ENCODE measurements at regions of chr10 and their contacts with region 1.

Region 1: GRCh38 chr10:17430647-17431355 is 23.6 kb downstream of the ST8SIA6 start:
- DNase-seq: peak; percentile 65 to 81 (median 70)
- H3K4me3 ChIP-seq: peak overlapping the region in 2 of 7 experiments; percentile 4 to 19
- H3K27ac ChIP-seq: peak overlapping the region; percentile 22 to 50
- H3K4me1 ChIP-seq: peaks cover 27 to 94% (median 78%) of the 10 kb centered on the region in 4 experiments
- H3K27me3 ChIP-seq: no peaks in the 10 kb centered on the region

Region 2: GRCh38 chr10:17290226-17290625 is 140.6 kb before region 1 on chr10:
- CTCF ChIA-PET with region 1: interaction called, 29 read pairs
- POLR2A ChIA-PET with region 1: no interaction called
- DNase-seq: peak; percentile 67 to 79 (median 76)
- H3K4me3 ChIP-seq: no peak overlapping the region
- H3K27ac ChIP-seq: no peak overlapping the region
- H3K4me1 ChIP-seq: peaks cover 0 to 4% (median 0%) of the 10 kb centered on the region in 4 experiments
- H3K27me3 ChIP-seq: no peaks in the 10 kb centered on the region

Region 3: DNA sequence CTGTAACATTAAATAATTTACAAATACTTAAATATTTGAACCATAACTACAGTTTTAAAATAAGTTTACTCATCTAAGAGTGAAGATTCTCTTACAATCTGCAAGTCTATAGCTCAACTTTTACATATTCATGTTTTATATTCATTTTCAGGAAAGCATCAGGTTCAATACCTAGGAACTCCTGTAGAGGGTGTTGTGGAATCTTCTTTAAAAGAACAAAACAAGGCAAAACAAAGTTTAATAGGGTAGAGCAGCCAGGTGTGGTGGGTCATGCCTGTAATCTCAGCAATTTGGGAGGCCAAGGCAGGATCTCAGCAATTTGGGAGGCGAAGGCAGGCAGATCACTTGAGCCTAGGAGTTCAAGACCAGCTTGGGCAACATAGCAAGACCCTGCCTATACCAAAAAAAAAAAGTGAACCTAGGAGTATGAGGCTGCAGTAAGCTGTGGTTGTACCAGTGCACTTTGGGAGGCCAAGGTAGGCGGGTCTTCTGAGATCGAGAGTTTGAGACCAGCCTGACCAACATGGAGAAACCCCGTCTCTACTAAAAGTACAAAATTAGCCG is 21.5 kb before region 1 on chr10:
- CTCF ChIA-PET with region 1: interaction called, 79 read pairs
- POLR2A ChIA-PET with region 1: interaction called, 9 read pairs
- DNase-seq: peak in 2 of 3 donors; percentile 53 to 56
- H3K4me3 ChIP-seq: no peak overlapping the region
- H3K27ac ChIP-seq: no peak overlapping the region
- H3K4me1 ChIP-seq: peaks cover 0 to 37% (median 18%) of the 10 kb centered on the region in 4 experiments
- H3K27me3 ChIP-seq: no peaks in the 10 kb centered on the region

Region 4: GRCh38 chr10:17418249-17418648 is 12.6 kb before region 1 on chr10:
- CTCF ChIA-PET with region 1: interaction called, 79 read pairs
- POLR2A ChIA-PET with region 1: interaction called, 9 read pairs
- DNase-seq: no peak
- H3K4me3 ChIP-seq: no peak overlapping the region
- H3K27ac ChIP-seq: no peak overlapping the region
- H3K4me1 ChIP-seq: peaks cover 0 to 32% (median 8%) of the 10 kb centered on the region in 4 experiments
- H3K27me3 ChIP-seq: no peaks in the 10 kb centered on the region

Region 5: GRCh38 chr10:17443707-17444387 is 13.0 kb after region 1 on chr10:
- CTCF ChIA-PET with region 1: interaction called, 64 read pairs
- POLR2A ChIA-PET with region 1: interaction called, 4 read pairs
- DNase-seq: peak in 2 of 3 donors; percentile 80 to 86
- H3K4me3 ChIP-seq: peak overlapping the region in 6 of 7 experiments; percentile 3 to 59 (median 38)
- H3K27ac ChIP-seq: peak overlapping the region; percentile 25 to 67
- H3K4me1 ChIP-seq: peaks cover 9 to 44% (median 18%) of the 10 kb centered on the region in 4 experiments
- H3K27me3 ChIP-seq: no peaks in the 10 kb centered on the region

Region 6: DNA sequence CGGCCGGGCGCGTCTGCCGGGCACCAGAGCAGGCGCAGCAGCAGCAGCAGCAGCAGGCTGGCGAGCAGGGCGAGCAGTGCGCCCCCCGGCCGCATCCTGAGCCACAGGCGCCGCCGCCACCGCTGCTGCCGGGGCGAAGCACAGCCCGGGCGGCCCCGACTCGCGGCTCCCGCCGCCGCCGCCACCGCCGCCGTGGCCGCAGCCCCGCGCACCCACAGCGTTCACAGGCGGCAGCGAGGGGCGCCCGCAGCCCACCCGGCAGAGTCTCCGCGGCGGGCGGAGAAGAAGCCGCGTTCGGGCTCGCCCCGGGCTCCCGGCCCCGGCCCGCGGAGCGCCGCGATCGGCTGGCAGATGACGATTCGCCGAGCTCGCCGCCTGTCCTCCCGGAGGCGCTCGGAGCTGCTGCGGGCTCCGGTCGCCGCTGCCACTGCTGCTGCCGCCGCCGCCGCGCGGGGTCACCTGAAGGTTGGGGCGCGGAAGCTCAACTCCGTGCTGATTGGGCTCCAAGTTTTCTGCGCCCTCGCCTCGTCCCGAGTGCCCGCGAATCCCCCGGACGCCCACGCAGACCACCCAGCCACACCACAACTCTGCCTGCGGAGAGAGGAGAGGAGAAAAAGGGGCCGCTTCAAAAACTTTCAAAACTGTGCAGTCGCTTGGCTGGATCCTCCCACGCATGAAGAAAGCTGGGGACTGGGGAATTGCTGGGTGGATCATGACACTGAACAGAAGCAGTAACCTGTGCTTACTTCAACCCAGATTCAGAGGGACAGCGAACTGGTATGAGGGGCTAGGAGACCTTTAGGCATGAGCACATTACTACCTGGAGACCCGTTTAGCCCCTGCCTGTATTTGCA is 23.6 kb after region 1 on chr10 and contains the start of gene ST8SIA6:
- CTCF ChIA-PET with region 1: interaction called, 10 read pairs
- POLR2A ChIA-PET with region 1: interaction called, 9 read pairs
- DNase-seq: peak; percentile 69 to 88 (median 80)
- H3K4me3 ChIP-seq: peak within 1 kb of the TSS; percentile 75 to 98 (median 90)
- H3K27ac ChIP-seq: peak within 1 kb of the TSS; percentile 75 to 89
- H3K4me1 ChIP-seq: peaks cover 4 to 29% (median 17%) of the 10 kb centered on the region in 4 experiments
- H3K27me3 ChIP-seq: no peaks in the 10 kb centered on the region

Measured in common myeloid progenitor, CD34-positive (primary cell).